Activated CD4-positive, alpha-beta memory T cell treated with anti-CD3 and anti-CD28 coated beads for 36 hours (primary cell): ENCODE measurements at regions of chr20 and their contacts with region 1.

Region 1: DNA sequence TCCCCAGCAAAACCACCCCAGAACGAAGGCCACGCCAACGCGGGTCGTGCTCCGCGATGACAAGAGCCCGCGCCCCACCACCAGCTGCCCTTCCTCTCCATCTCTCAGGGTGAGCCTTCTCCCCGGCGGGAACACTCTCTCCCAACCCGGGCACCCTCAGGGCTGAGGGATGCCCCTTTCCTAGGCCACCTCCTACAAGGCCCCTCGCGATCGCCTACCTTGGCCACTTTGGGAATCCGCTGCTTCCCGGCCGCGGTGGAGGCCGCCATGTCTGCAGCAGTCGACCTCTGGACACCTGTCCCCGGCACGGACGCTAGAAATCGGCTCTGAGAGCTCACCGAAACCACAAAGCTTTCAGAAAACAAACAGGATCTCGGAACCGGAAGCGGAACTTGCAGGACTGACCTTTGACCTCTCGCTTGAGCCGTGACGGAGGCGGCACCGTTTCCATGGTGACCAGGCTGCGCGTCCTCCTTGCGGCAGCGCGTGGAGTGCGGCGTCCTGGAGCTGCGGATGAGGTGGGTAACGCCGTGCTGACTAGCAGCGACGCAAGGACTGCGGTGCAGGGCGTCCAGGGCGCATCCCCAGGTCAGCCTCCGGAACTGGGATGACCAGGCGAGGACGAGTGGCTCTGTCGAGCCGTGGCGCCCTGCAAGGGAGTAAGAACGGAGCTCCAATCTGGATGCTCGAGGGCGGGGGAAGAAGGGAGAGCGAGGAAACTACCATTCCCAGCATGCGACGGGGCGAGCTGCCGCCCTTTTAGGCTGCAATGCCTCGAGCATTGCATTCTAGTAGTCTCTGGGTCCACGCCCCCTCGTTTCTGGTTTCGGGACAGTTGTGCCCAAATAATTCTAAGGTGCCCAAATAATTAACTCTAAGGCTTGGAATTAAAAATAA is at the starts of genes CFAP61 and CRNKL1:
- DNase-seq: peak; percentile 98
- H3K4me3 Mint-ChIP-seq: peak within 1 kb of the TSS; percentile 99
- H3K27ac Mint-ChIP-seq: peak within 1 kb of the TSS; percentile 96
- H3K4me1 Mint-ChIP-seq: peaks cover 24% of the 10 kb centered on the region
- H3K27me3 Mint-ChIP-seq: peaks cover 8% of the 10 kb centered on the region
- total RNA-seq, gene CFAP61: not detected
- total RNA-seq, gene CRNKL1: 21.5 to 21.8 TPM

Region 2: GRCh38 chr20:20017001-20017843 is 35.1 kb before region 1 on chr20 and contains the start of gene NAA20:
- CTCF ChIA-PET with region 1: interaction called, 19 read pairs
- POLR2A ChIA-PET with region 1: interaction called, 22 read pairs
- intact Hi-C with region 1: loop called (anchors 1 kb)
- DNase-seq: peak; percentile 96
- H3K4me3 Mint-ChIP-seq: peak within 1 kb of the TSS; percentile 91
- H3K27ac Mint-ChIP-seq: peak within 1 kb of the TSS; percentile 89
- H3K4me1 Mint-ChIP-seq: peaks cover 54% of the 10 kb centered on the region
- H3K27me3 Mint-ChIP-seq: no peaks in the 10 kb centered on the region
- total RNA-seq, gene NAA20: 82.6 to 82.9 TPM

Region 3: GRCh38 chr20:20022498-20022897 is 29.8 kb before region 1 on chr20:
- CTCF ChIA-PET with region 1: interaction called, 19 read pairs
- POLR2A ChIA-PET with region 1: interaction called, 22 read pairs
- intact Hi-C with region 1: loop called (anchors 1 kb)
- DNase-seq: peak; percentile 37
- H3K4me3 Mint-ChIP-seq: no peak overlapping the region
- H3K27ac Mint-ChIP-seq: peak overlapping the region; percentile 71
- H3K4me1 Mint-ChIP-seq: peaks cover 47% of the 10 kb centered on the region
- H3K27me3 Mint-ChIP-seq: no peaks in the 10 kb centered on the region

Region 4: DNA sequence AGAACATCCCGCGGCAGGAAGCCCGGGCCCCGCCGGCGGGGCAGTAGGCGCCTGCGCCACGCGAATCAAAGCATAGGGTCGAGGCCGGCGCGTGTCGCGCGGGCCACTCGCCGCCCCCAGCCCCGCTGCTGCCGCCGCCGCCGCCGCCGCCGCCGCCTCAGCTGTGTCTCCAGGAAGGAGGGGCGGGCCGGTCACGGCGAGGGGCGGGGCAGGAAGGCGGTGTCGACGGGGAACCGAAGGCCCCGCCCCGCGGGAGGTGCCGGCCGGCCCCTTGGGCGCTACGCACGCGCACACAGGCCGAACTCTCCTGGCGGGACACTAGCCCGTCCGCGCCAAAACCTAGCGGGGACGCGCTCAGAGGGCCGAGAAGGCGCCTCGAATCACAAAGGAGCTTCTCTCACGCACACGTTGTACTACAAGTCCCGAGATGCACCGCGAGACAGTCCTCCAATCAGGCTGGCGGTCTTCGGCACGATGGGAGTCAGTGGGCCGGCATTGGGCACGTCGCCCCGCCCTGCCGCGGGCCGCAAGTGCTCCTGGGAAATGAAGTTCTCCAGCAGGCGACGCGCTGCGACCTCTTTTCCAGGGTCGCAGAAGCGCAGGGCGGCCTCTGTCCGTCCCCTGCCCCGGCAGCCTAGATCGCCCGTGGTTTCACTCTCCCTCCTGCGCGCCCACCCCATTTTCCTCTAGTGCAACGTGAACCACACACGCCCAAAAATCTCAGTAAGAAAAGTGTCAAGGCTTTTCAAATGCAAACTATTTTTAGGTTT is 660.3 kb after region 1 on chr20 and contains the start of gene RALGAPA2:
- CTCF ChIA-PET with region 1: no interaction called
- POLR2A ChIA-PET with region 1: no interaction called
- intact Hi-C with region 1: loop called (anchors 1 kb)
- DNase-seq: peak; percentile 95
- H3K4me3 Mint-ChIP-seq: peak within 1 kb of the TSS; percentile 76
- H3K27ac Mint-ChIP-seq: peak within 1 kb of the TSS; percentile 94
- H3K4me1 Mint-ChIP-seq: peaks cover 25% of the 10 kb centered on the region
- H3K27me3 Mint-ChIP-seq: peaks cover 2% of the 10 kb centered on the region
- total RNA-seq, gene RALGAPA2: 15.9 to 16.6 TPM